ENCODE measurements at regions of chr15 and their contacts with region 1.

Region 1: GRCh38 chr15:36887214-36887961 is 213.0 kb downstream of the MEIS2 start:
- DNase-seq: peak; percentile 67 to 79
- H3K4me3 ChIP-seq: peak overlapping the region; percentile 41 to 43
- H3K27ac ChIP-seq: peak overlapping the region; percentile 90 to 93
- H3K4me1 ChIP-seq: peaks cover 0 to 3% of the 10 kb centered on the region in 2 donors
- H3K27me3 ChIP-seq: no peaks in the 10 kb centered on the region
- CTCF ChIP-seq: no peak
- POLR2A ChIP-seq: no peak

Region 2: GRCh38 chr15:36778531-36778930 is 108.9 kb before region 1 on chr15:
- intact Hi-C with region 1: no loop called
- DNase-seq: no peak
- H3K4me3 ChIP-seq: no peak overlapping the region
- H3K27ac ChIP-seq: no peak overlapping the region
- H3K4me1 ChIP-seq: no peaks in the 10 kb centered on the region
- H3K27me3 ChIP-seq: no peaks in the 10 kb centered on the region
- CTCF ChIP-seq: no peak
- POLR2A ChIP-seq: no peak

Region 3: GRCh38 chr15:36914960-36915808 is 27.8 kb after region 1 on chr15:
- intact Hi-C with region 1: no loop called
- DNase-seq: no peak
- H3K4me3 ChIP-seq: no peak overlapping the region
- H3K27ac ChIP-seq: peak overlapping the region; percentile 73 to 81
- H3K4me1 ChIP-seq: peaks cover 0 to 4% of the 10 kb centered on the region in 2 donors
- H3K27me3 ChIP-seq: no peaks in the 10 kb centered on the region
- CTCF ChIP-seq: no peak
- POLR2A ChIP-seq: no peak

Region 4: DNA sequence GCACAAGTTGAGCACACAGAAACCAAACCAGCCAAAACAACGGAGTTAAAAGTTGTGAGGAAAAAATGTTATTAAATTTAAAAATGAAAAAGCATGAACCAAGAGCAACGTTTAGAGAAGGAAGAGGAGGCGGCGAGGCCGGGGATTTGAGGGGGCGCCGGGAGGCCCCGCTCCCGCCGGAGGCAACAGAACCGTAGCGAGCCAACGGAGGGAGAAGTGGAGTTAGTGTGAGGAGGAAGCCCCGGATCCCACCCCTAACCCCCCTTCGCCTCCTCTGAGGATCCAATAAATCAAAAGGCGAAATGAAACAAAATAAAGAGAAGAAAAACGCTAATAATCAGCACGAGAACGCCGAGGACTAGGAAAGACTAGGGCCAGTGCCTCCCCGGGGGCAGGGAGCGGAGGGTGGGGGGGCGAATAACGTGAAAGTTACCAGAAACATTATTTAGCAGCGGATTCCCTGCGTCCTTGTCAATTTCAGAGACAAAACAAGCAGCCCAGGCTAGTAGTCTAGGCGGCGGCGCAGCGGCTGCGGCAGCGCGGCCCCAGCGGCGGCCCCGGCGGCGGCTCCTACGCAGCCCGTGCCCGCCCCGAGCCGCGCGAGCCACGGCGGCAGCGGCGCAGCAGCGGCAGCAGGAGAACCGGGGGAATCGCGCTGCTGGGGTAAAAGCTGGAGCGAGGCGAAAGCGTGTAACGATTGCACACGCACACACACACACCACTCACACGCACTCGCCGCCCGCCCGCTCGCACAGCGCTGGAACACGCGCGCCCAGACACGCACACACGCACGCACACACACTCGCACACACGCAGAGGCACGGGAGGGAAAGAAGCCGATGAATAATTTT is 211.3 kb after region 1 on chr15:
- intact Hi-C with region 1: loop called (anchors 5 kb)
- DNase-seq: peak; percentile 44 to 57
- H3K4me3 ChIP-seq: peak overlapping the region; percentile 66 to 92
- H3K27ac ChIP-seq: peak overlapping the region; percentile 97
- H3K4me1 ChIP-seq: no peaks in the 10 kb centered on the region
- H3K27me3 ChIP-seq: no peaks in the 10 kb centered on the region
- CTCF ChIP-seq: no peak
- POLR2A ChIP-seq: no peak